Breast epithelium (tissue), 4 donors: ENCODE measurements at regions of chr10 and their contacts with region 1.

Region 1: GRCh38 chr10:104906112-104906511 is 265.0 kb downstream of the SORCS3 start:
- DNase-seq: no peak
- H3K4me3 ChIP-seq: no peak overlapping the region
- H3K27ac ChIP-seq: no peak overlapping the region
- H3K4me1 ChIP-seq: no peaks in the 10 kb centered on the region
- H3K27me3 ChIP-seq: peaks cover 0 to 10% of the 10 kb centered on the region in 2 donors
- CTCF ChIP-seq: no peak
- POLR2A ChIP-seq: no peak

Region 2: DNA sequence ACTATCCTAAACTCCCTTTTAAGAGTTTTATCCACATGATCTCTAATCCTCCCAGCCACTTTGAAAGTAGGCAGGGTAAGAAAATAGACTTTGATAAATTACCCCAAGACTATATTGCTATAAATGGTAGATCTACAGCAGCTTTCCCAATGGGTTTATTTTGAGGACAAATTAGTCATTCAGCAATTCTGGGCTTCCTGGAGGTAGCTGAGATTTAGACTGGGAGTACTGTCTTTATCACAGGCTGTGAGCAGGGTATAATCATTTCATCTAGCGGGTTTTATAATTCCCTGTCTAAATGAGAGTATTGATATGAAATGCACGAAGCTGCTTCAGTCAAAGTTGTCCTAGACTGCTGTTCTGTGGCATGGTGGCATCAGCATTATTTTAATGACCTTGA is 14.4 kb after region 1 on chr10:
- intact Hi-C with region 1: loop called (anchors 1 kb)
- DNase-seq: no peak
- H3K4me3 ChIP-seq: no peak overlapping the region
- H3K27ac ChIP-seq: no peak overlapping the region
- H3K4me1 ChIP-seq: no peaks in the 10 kb centered on the region
- H3K27me3 ChIP-seq: no peaks in the 10 kb centered on the region
- CTCF ChIP-seq: no peak
- POLR2A ChIP-seq: no peak

Region 3: GRCh38 chr10:106410331-106410730 is 1504.2 kb after region 1 on chr10:
- intact Hi-C with region 1: no loop called
- DNase-seq: no peak
- H3K4me3 ChIP-seq: no peak overlapping the region
- H3K27ac ChIP-seq: no peak overlapping the region
- H3K4me1 ChIP-seq: no peaks in the 10 kb centered on the region
- H3K27me3 ChIP-seq: no peaks in the 10 kb centered on the region
- CTCF ChIP-seq: no peak
- POLR2A ChIP-seq: no peak